IMR-90 (cell line): ENCODE measurements at regions of chr6 and their contacts with region 1.

Region 1: DNA sequence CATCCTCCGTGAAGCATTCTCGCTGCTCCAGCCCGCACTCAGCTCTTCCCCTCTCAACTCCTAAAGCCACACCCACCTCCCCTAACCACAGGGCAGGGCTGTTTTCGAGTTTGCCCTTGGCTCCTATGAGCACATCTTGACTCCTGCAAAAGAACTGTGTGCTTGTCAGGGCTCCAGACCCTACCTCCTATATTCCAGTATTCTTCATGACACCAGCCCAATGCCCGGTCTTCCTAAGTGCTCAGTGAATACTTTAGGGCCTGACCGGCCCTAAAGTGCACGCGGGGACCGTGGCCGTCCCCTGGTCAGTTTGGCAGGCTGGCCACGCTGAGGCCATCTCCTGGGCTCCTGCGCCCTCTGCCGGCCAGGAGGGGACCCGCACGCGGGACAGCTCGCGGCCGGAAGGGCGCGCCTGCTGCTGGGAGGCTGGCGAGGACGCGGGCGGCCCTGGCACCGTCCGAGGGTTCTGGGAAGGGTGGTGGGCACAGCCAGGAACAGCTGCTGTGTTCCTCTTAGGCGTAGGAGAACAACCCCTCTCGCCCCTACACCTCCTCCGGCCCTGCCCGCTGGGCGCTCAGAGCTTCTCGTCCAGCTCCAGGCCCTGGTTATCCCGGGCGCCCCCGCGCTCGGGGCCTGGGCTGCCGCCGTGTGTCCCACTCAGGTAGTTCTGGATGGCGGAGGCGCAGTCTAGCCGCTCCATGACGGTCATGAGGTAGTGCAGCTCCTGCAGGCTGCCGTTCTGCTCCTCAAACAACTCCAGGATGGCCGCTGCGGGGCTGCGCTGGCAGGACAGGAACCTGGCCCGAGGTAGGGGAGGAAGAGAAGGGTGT is 11.0 kb downstream of the UNC5CL start:
- DNase-seq: peak; percentile 44
- ATAC-seq: peak; percentile 99
- H3K4me3 ChIP-seq: peak overlapping the region; percentile 40
- H3K27ac ChIP-seq: no peak overlapping the region
- H3K4me1 ChIP-seq: peaks cover 4% of the 10 kb centered on the region; the same call in 1 of the 2 replicates
- H3K27me3 ChIP-seq: peaks cover 7% of the 10 kb centered on the region; the same call in 1 of the 2 replicates
- CTCF ChIP-seq: peak; percentile 98
- POLR2A ChIP-seq: 0 out of 2 replicates have a peak, but pooled peaks have one; percentile 32
- RAD21 ChIP-seq: peak; percentile 97

Region 2: GRCh38 chr6:39347906-39348585 is 1680.0 kb before region 1 on chr6:
- CTCF ChIA-PET with region 1: no interaction called
- POLR2A ChIA-PET with region 1: no interaction called
- dilution Hi-C with region 1: no loop called
- in situ Hi-C with region 1: loop called (anchors 25 kb)
- intact Hi-C with region 1: loop called (anchors 10 kb)
- DNase-seq: peak; percentile 51
- ATAC-seq: peak; percentile 99
- H3K4me3 ChIP-seq: no peak overlapping the region
- H3K27ac ChIP-seq: no peak overlapping the region
- H3K4me1 ChIP-seq: no peaks in the 10 kb centered on the region
- H3K27me3 ChIP-seq: no peaks in the 10 kb centered on the region; the same call in 1 of the 2 replicates
- CTCF ChIP-seq: peak; percentile 82
- POLR2A ChIP-seq: no peak
- RAD21 ChIP-seq: peak; percentile 82

Region 3: DNA sequence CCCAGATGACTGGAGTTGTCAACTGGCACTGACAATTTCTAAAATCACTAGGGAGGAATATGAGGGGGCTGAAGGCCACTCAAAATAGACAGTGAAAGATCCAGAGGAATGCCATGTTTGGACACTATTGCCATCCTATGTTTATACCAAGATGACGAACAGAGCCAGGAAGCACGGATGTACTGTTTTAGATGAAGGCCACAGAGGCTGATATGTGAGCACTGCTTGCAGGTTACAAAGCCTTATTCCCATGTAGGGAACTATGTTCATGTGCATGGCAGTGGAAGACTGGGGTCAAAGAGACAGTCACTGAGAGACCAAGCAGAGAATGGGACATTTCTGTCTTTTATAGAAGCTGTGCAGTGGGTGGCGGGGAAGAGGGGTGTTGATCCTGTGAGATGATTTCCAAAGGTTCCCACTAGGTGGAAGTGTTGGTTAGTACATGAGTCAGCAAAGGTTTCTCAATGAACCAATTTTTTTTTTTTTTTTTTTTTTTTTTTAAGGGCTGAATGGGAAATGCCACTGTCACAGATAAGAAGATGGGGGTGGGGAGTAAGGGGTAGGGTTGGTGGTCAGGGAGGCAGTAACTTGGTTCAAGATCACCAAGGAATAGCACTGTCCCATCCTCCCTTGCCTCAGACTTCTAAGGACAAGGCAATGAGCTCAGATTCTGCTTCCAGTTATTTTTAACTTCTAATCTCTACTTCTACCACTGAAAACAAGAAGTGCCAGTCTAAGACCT is 1047.0 kb before region 1 on chr6:
- CTCF ChIA-PET with region 1: no interaction called
- POLR2A ChIA-PET with region 1: no interaction called
- dilution Hi-C with region 1: no loop called
- in situ Hi-C with region 1: loop called (anchors 25 kb)
- intact Hi-C with region 1: loop called (anchors 2 kb)
- DNase-seq: peak; percentile 57
- ATAC-seq: peak; percentile 89
- H3K4me3 ChIP-seq: no peak overlapping the region
- H3K27ac ChIP-seq: no peak overlapping the region
- H3K4me1 ChIP-seq: peaks cover 5% of the 10 kb centered on the region
- H3K27me3 ChIP-seq: 0 out of 2 replicates have a peak, but pooled peaks cover 2% of the 10 kb centered on the region
- CTCF ChIP-seq: peak; percentile 66
- POLR2A ChIP-seq: no peak
- RAD21 ChIP-seq: peak; percentile 67

Region 4: DNA sequence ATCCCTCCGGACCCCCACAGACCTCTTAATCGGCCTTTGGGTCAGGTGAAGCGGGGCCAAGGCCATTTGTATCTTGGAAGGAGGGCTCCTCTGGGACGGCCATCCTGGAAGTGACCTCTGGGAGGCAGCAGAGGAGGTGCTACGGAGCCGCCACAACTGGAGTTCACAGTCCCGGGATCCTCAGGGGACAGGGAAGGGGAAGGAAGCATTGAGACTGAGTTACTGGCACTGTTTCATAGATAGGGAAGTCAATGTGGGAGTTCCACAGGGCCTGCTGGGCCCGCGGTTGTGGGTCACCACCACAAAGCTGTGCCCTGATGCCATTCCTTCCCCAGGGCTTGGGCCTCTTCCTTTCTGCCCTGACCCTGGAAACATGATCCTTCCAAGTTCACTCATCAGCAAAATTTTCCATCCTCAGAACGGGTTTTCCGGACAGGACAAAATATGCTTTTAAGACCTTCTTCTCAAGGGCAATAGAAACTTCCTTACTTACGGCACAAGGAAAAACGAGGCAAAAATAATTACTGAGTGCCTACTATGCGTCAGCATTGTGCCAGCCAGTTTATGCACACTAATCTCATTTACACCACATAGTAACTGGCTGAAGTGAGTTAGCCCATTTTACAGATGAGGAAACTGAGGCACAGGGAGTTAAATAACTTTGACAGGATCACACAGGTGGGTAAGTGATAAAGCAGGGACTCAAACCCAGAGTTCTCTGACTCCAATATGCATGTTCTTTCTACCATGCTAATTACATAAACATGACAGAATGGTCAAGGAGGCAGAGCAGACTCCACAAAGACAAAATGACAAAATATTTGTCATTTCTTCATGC is 132.8 kb before region 1 on chr6:
- CTCF ChIA-PET with region 1: interaction called, 24 read pairs
- POLR2A ChIA-PET with region 1: no interaction called
- dilution Hi-C with region 1: no loop called
- in situ Hi-C with region 1: loop called (anchors 5 kb)
- intact Hi-C with region 1: loop called (anchors 1 kb)
- DNase-seq: peak; percentile 54
- ATAC-seq: peak; percentile 99
- H3K4me3 ChIP-seq: no peak overlapping the region
- H3K27ac ChIP-seq: no peak overlapping the region
- H3K4me1 ChIP-seq: no peaks in the 10 kb centered on the region
- H3K27me3 ChIP-seq: peaks cover 23% of the 10 kb centered on the region
- CTCF ChIP-seq: peak; percentile 86
- POLR2A ChIP-seq: 0 out of 2 replicates have a peak, but pooled peaks have one; percentile 40
- RAD21 ChIP-seq: peak; percentile 94

Region 5: DNA sequence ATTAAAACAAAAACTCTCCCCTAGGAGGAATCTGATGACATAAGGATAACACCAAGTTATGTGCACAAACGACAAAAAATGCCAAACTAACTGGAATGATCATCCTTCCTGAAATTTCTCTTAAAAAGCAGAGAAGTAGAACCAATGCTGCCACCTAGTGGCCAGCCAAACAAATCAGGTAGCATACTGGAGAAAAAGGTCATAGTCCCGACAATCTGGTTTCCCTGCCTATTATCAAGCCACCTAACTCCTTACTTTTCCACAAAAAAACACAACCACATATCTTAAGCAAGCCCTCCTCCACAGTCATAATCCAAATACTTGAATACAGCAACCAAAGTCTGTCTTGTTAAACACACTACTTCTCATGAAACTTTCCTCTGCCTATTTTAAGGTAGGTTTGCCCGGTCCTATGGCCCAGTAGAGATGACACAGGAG is 38.9 kb after region 1 on chr6:
- CTCF ChIA-PET with region 1: no interaction called
- POLR2A ChIA-PET with region 1: no interaction called
- dilution Hi-C with region 1: no loop called
- in situ Hi-C with region 1: no loop called
- intact Hi-C with region 1: loop called (anchors 1 kb)
- DNase-seq: peak; percentile 84
- ATAC-seq: peak; percentile 40; the same call in 1 of the 2 replicates
- H3K4me3 ChIP-seq: no peak overlapping the region
- H3K27ac ChIP-seq: no peak overlapping the region
- H3K4me1 ChIP-seq: no peaks in the 10 kb centered on the region
- H3K27me3 ChIP-seq: no peaks in the 10 kb centered on the region
- CTCF ChIP-seq: peak; percentile 79
- POLR2A ChIP-seq: no peak
- RAD21 ChIP-seq: peak; percentile 78